Naive thymus-derived CD4-positive, alpha-beta T cell (primary cell): ENCODE measurements at regions of chr1 and their contacts with region 1.

Region 1: DNA sequence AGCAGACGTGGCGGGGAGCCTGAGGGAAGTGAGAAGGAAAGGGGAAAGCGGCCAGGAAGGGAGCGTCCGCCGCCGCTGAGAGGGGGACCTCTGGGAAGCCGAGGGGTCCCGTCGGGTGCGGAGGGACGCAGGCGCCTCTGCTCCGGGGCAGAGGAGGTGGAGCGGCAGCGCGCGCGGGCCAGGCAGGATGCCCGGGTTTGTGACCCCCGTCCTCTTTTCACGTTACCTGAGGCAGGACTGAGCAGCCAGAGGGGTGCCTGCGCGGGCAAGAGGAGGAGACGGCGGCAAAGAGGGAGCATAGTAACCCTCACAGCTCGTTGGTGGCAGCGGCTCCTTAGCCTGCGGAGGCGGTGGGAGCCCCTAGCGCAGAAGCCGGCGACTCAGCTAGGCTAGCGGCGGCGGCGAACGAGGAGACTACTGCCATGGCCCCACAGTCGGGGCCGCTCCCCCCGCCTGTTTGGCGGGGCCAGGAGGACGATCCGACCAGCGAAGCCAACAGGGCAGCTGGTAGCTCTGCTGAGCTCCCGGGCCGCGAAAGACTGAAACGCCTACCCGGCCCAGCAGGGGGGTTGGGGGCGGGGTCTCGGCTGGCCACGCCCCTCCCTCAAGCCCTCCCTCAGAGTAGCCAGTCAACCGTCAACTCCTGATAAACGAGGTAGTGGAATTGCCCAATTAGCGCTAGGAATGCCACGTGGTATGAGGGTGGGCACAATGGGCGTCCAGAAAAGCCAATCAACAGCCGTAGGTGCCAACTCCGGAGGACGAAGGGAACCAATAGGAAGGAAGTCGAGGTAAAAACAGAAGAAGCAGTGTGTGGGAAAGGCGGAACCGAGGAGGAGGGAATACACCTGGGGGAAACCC is at the start of gene TESK2:
- DNase-seq: peak; percentile 89 to 99 (median 98)
- ATAC-seq: peak; percentile 96
- H3K4me3 ChIP-seq: peak within 1 kb of the TSS; percentile 76
- H3K4me3 Mint-ChIP-seq: no peak within 1 kb of the TSS
- H3K27ac ChIP-seq: peak within 1 kb of the TSS; percentile 77
- H3K27ac Mint-ChIP-seq: no peak within 1 kb of the TSS
- H3K4me1 ChIP-seq: peaks cover 9% of the 10 kb centered on the region in 2 donors
- H3K4me1 Mint-ChIP-seq: peaks cover 5 to 15% (median 10%) of the 10 kb centered on the region in 7 donors
- H3K27me3 ChIP-seq: no peaks in the 10 kb centered on the region
- H3K27me3 Mint-ChIP-seq: peaks cover 0 to 4% (median 0%) of the 10 kb centered on the region in 5 donors
- total RNA-seq, gene TESK2: 3.3 to 8.9 (median 7.4) TPM

Region 2: GRCh38 chr1:44730741-44731512 is 759.9 kb before region 1 on chr1 and contains the start of gene RNU5D-1:
- CTCF ChIA-PET with region 1: interaction called, 5 read pairs
- POLR2A ChIA-PET with region 1: interaction called, 3 read pairs
- intact Hi-C with region 1: loop called in 1 of 2 experiments (anchors 1 kb)
- DNase-seq: peak; percentile 77 to 92 (median 89)
- ATAC-seq: peak; percentile 85
- H3K4me3 ChIP-seq: peak within 1 kb of the TSS; percentile 18
- H3K4me3 Mint-ChIP-seq: peak within 1 kb of the TSS; percentile 54 to 93 (median 84)
- H3K27ac ChIP-seq: peak within 1 kb of the TSS; percentile 86
- H3K27ac Mint-ChIP-seq: peak within 1 kb of the TSS; percentile 97 to 100 (median 98)
- H3K4me1 ChIP-seq: peaks cover 10 to 13% of the 10 kb centered on the region in 2 donors
- H3K4me1 Mint-ChIP-seq: peaks cover 14 to 58% (median 43%) of the 10 kb centered on the region in 7 donors
- H3K27me3 ChIP-seq: no peaks in the 10 kb centered on the region
- H3K27me3 Mint-ChIP-seq: no peaks in the 10 kb centered on the region
- total RNA-seq, gene RNU5D-1: not detected

Region 3: DNA sequence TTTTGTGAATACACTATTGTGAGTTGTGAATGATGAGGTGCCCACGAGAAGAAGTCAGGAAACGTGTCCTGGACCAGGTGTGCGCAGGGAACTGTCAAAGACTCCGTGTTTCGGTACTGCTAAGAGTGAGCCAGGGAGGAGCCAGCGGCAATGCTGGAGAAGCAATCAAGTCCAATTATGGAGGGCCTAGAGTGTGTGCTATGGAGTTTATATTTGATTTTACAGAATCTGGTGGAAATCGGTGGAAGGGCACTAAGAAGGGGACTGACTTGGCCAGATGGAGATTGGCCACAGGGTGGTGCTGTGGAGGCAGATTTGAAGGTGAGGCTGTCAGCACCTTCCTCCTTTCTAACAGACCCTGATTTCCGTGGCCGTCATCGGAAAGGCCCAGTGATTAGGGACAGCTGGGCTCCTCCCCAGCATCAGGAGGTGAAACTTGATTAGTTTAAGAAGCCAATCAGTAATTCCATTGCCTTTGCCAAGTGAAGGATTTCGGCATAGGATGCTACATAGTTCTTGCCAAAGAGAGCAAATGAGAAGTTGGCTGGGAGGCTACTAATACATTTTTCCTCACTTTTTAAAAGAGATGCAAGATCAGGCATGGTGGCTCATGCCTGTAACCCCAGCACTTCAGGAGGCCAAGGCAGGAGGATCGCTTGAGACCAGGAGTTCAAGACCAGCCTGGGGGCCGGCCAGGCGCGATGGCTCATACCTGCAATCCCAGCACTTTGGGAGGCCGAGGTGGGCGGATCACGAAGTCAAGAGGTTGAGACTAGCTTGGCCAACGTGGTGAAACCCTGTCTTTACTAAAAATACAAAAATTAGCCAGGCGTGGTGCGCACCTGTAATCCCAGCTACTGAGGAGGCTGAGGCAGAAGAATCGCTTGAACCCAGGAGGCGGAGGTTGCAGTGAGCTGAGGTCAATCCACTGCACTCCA is 654.8 kb before region 1 on chr1:
- CTCF ChIA-PET with region 1: interaction called, 3 read pairs
- POLR2A ChIA-PET with region 1: no interaction called
- intact Hi-C with region 1: loop called in 1 of 2 experiments (anchors 2 kb)
- DNase-seq: peak; percentile 58 to 82 (median 75)
- ATAC-seq: peak; percentile 96
- H3K4me3 ChIP-seq: no peak overlapping the region
- H3K4me3 Mint-ChIP-seq: peak overlapping the region in 9 of 10 donors; percentile 3 to 73 (median 42)
- H3K27ac ChIP-seq: no peak overlapping the region
- H3K27ac Mint-ChIP-seq: peak overlapping the region in 8 of 9 donors; percentile 12 to 81 (median 41)
- H3K4me1 ChIP-seq: no peaks in the 10 kb centered on the region
- H3K4me1 Mint-ChIP-seq: peaks cover 7 to 19% (median 8%) of the 10 kb centered on the region in 7 donors
- H3K27me3 ChIP-seq: no peaks in the 10 kb centered on the region
- H3K27me3 Mint-ChIP-seq: peaks cover under 1 to 9% (median under 1%) of the 10 kb centered on the region in 5 donors

Region 4: DNA sequence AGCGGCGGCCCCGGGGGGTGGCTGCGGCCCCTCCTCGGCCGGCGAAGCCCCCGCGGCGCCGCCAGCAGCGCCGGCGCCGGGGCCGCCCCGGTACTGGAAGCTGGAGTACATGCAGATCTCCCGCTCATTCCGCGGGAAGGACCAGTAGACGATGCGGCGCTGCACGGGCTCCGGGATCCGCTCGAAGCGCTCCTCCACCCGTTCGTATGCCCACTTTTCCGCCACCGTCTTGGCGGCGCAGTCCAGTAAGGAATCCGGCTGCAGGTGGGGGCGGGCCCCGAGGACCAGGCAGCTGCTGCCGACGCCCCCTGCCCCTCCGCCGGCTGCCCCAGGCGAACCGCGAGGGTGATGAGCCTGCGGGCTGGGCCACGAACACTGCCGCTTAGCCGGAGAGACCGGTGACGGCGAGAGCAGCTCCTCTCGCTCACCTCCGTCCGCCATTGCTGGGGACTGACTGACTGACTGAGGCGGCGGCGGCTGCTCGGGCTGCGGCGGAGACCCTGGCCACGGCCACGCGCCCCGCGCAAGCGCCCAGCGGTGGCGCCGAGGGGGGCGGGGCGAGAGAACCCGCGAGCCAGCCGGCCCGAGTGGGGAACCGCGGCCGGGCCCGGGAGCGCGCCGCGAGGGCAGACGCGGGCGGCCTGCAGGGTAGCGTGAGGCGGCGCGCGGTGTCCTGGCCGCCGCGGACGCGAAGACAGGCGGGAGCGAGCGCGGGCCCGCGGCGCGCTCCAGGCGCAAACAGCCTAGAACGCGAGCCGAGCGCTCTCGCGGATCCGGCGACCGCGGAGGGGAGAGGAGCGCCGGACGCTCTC is 284.7 kb before region 1 on chr1 and contains the start of gene ZSWIM5:
- CTCF ChIA-PET with region 1: interaction called, 4 read pairs
- POLR2A ChIA-PET with region 1: no interaction called
- intact Hi-C with region 1: loop called in 1 of 2 experiments (anchors 5 kb)
- DNase-seq: peak; percentile 53 to 74 (median 66)
- ATAC-seq: peak; percentile 88
- H3K4me3 ChIP-seq: peak within 1 kb of the TSS; percentile 77
- H3K4me3 Mint-ChIP-seq: peak within 1 kb of the TSS; percentile 84 to 100 (median 94)
- H3K27ac ChIP-seq: peak within 1 kb of the TSS; percentile 50
- H3K27ac Mint-ChIP-seq: peak within 1 kb of the TSS; percentile 66 to 94 (median 83)
- H3K4me1 ChIP-seq: peaks cover 11 to 18% of the 10 kb centered on the region in 2 donors
- H3K4me1 Mint-ChIP-seq: peaks cover 13 to 41% (median 27%) of the 10 kb centered on the region in 7 donors
- H3K27me3 ChIP-seq: no peaks in the 10 kb centered on the region
- H3K27me3 Mint-ChIP-seq: peaks cover 0 to 56% (median 0%) of the 10 kb centered on the region in 5 donors
- total RNA-seq, gene ZSWIM5: 0.17 to 3.6 (median 2.3) TPM

Region 5: DNA sequence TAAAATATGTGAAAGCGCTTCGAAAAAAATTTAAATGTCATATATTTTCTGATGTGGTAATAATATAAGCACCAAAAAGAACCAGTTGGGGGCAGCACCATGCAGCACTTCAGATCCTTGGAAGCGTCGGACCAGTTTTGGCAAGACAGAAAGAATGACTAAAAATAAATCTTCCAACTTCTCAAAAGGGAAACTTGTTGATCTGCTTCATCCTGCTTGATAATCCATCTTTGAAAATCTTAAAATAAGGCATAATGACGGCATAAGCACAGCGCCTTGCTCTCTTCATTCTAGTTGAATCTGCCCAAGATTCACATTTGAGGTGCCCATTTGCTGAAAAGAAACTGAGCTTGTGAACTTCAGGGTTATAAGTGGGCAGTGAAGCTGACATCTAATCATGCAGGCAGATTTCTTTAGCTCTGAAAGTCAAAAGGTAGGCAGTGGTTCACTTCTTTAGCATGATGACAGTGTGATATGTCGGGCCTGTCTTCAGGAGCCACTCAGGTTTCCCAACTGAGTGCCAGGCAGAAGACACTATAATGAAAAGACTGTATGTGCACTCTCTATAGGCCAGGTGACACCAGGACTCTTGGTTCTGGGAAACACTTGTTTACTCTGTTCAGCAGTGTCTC is 130.9 kb before region 1 on chr1:
- CTCF ChIA-PET with region 1: interaction called, 94 read pairs
- POLR2A ChIA-PET with region 1: interaction called, 9 read pairs
- intact Hi-C with region 1: loop called (anchors 1 kb)
- DNase-seq: peak in 7 of 9 donors; percentile 28 to 58 (median 52)
- ATAC-seq: peak; percentile 77
- H3K4me3 ChIP-seq: no peak overlapping the region
- H3K4me3 Mint-ChIP-seq: peak overlapping the region in 3 of 10 donors; percentile 7 to 27 (median 16)
- H3K27ac ChIP-seq: no peak overlapping the region
- H3K27ac Mint-ChIP-seq: peak overlapping the region in 3 of 9 donors; percentile 12 to 45 (median 39)
- H3K4me1 ChIP-seq: no peaks in the 10 kb centered on the region
- H3K4me1 Mint-ChIP-seq: peaks cover 5 to 7% (median 5%) of the 10 kb centered on the region in 7 donors
- H3K27me3 ChIP-seq: no peaks in the 10 kb centered on the region
- H3K27me3 Mint-ChIP-seq: no peaks in the 10 kb centered on the region

Region 6: GRCh38 chr1:45458894-45459293 is 32.0 kb before region 1 on chr1:
- CTCF ChIA-PET with region 1: no interaction called
- POLR2A ChIA-PET with region 1: no interaction called
- intact Hi-C with region 1: no loop called
- DNase-seq: no peak
- ATAC-seq: no peak
- H3K4me3 ChIP-seq: no peak overlapping the region
- H3K4me3 Mint-ChIP-seq: no peak overlapping the region
- H3K27ac ChIP-seq: no peak overlapping the region
- H3K27ac Mint-ChIP-seq: no peak overlapping the region
- H3K4me1 ChIP-seq: no peaks in the 10 kb centered on the region
- H3K4me1 Mint-ChIP-seq: peaks cover 0 to 3% (median 0%) of the 10 kb centered on the region in 7 donors
- H3K27me3 ChIP-seq: no peaks in the 10 kb centered on the region
- H3K27me3 Mint-ChIP-seq: no peaks in the 10 kb centered on the region

Region 7: GRCh38 chr1:45750298-45751038 is 259.6 kb after region 1 on chr1 and contains the start of gene IPP:
- CTCF ChIA-PET with region 1: no interaction called
- POLR2A ChIA-PET with region 1: no interaction called
- intact Hi-C with region 1: loop called (anchors 1 to 5 kb)
- DNase-seq: peak; percentile 81 to 96 (median 88)
- ATAC-seq: peak; percentile 94
- H3K4me3 ChIP-seq: peak within 1 kb of the TSS; percentile 81
- H3K4me3 Mint-ChIP-seq: peak within 1 kb of the TSS; percentile 90 to 98 (median 96)
- H3K27ac ChIP-seq: peak within 1 kb of the TSS; percentile 97
- H3K27ac Mint-ChIP-seq: peak within 1 kb of the TSS; percentile 95 to 100 (median 99)
- H3K4me1 ChIP-seq: peaks cover 0 to 12% of the 10 kb centered on the region in 2 donors
- H3K4me1 Mint-ChIP-seq: peaks cover 7 to 50% (median 37%) of the 10 kb centered on the region in 7 donors
- H3K27me3 ChIP-seq: no peaks in the 10 kb centered on the region
- H3K27me3 Mint-ChIP-seq: peaks cover 0 to 2% (median 0%) of the 10 kb centered on the region in 5 donors
- total RNA-seq, gene IPP: 9.1 to 19.8 (median 12.5) TPM